ENCODE measurements at regions of chr3 and their contacts with region 1.

Region 1: DNA sequence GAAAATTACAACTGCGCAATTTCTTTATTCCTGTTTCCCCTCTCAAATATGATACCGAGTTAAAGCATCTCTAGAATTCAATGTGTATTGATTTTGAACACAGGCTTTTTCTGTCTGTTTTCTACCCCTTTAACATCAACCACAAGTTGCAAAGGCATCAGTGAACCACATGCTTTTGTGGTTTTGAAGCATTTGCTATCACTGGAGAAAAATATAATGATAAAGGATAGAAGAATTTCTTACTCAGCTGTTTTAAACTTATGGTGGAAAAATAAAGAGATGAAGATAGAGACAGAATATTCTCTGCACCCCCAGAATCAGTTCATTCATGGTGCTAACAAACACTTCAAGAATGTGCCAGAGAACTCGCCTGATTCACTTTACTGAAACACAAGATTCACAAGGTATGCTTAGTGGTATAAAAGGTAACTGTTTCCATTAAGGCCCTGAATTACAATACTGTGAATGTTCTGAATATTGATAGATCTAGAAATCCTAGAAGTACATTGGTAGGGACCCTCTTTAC is 9.5 kb upstream of the DPPA4 start:
- DNase-seq: no peak
- ATAC-seq: no peak
- H3K4me3 ChIP-seq: no peak overlapping the region
- H3K27ac ChIP-seq: no peak overlapping the region
- H3K4me1 ChIP-seq: no peaks in the 10 kb centered on the region
- H3K27me3 ChIP-seq: peaks cover 16% of the 10 kb centered on the region
- CTCF ChIP-seq: no peak

Region 2: GRCh38 chr3:109213321-109213720 is 133.5 kb before region 1 on chr3:
- CTCF ChIA-PET with region 1: no interaction called
- POLR2A ChIA-PET with region 1: no interaction called
- intact Hi-C with region 1: no loop called
- DNase-seq: no peak
- ATAC-seq: no peak
- H3K4me3 ChIP-seq: no peak overlapping the region
- H3K27ac ChIP-seq: no peak overlapping the region
- H3K4me1 ChIP-seq: no peaks in the 10 kb centered on the region
- H3K27me3 ChIP-seq: peaks cover 19% of the 10 kb centered on the region; the same call in 1 of the 2 replicates
- CTCF ChIP-seq: no peak

Region 3: GRCh38 chr3:109336291-109336861 is 10.5 kb before region 1 on chr3:
- CTCF ChIA-PET with region 1: no interaction called
- POLR2A ChIA-PET with region 1: interaction called, 11 read pairs
- intact Hi-C with region 1: no loop called
- DNase-seq: no peak
- ATAC-seq: no peak
- H3K4me3 ChIP-seq: no peak overlapping the region
- H3K27ac ChIP-seq: no peak overlapping the region
- H3K4me1 ChIP-seq: no peaks in the 10 kb centered on the region
- H3K27me3 ChIP-seq: peaks cover 37% of the 10 kb centered on the region
- CTCF ChIP-seq: no peak